ENCODE measurements at regions of chr7 and their contacts with region 1.

Region 1: DNA sequence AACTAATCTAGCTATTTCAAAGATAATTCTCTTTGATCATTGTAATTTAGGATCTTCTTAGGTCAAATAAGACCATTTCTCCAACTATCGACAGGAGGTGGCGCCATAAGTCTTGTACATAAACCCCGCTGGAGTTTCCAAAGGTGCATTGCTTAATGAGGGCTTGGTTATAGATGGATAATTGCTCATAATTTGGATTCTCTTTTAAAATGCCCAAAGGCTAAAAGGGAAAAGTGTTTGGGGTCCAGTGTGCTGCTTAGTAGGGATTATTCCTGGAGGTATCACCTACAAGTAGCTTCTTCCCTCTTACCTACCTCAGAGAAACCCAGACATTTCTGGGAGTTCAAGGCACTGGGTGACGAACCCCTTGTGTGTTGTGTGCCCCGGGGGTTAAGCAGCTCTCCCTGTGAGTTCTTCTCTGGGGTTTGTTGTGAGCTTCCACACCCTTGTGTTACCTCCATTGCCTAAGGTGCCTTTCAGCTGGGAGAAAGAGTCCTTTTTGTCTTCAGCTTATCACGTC is 75.2 kb downstream of the PAXIP1 start:
- DNase-seq: peak; percentile 39
- ATAC-seq: peak; percentile 87
- H3K4me3 ChIP-seq: peak overlapping the region; percentile 66
- H3K27ac ChIP-seq: peak overlapping the region; percentile 82
- H3K4me1 ChIP-seq: peaks cover 4% of the 10 kb centered on the region; the same call in 1 of the 2 replicates
- H3K27me3 ChIP-seq: no peaks in the 10 kb centered on the region
- CTCF ChIP-seq: peak; percentile 61 to 76 (median 62)
- EP300 ChIP-seq: no peak
- POLR2A ChIP-seq: no peak
- RAD21 ChIP-seq: peak; percentile 91

Region 2: GRCh38 chr7:154709840-154710520 is 217.7 kb before region 1 on chr7:
- CTCF ChIA-PET with region 1: no interaction called
- POLR2A ChIA-PET with region 1: no interaction called
- RAD21 ChIA-PET with region 1: no interaction called
- SMC1A ChIA-PET with region 1: no interaction called
- in situ Hi-C with region 1: no loop called
- intact Hi-C with region 1: no loop called
- DNase-seq: no peak
- ATAC-seq: no peak
- H3K4me3 ChIP-seq: no peak overlapping the region
- H3K27ac ChIP-seq: no peak overlapping the region
- H3K4me1 ChIP-seq: no peaks in the 10 kb centered on the region
- H3K27me3 ChIP-seq: no peaks in the 10 kb centered on the region
- CTCF ChIP-seq: no peak
- EP300 ChIP-seq: no peak
- POLR2A ChIP-seq: no peak
- RAD21 ChIP-seq: no peak

Region 3: GRCh38 chr7:154913638-154914312 is 13.9 kb before region 1 on chr7:
- CTCF ChIA-PET with region 1: interaction called, 61 read pairs
- POLR2A ChIA-PET with region 1: no interaction called
- RAD21 ChIA-PET with region 1: interaction called, 7 read pairs
- SMC1A ChIA-PET with region 1: interaction called, 16 read pairs
- in situ Hi-C with region 1: no loop called
- intact Hi-C with region 1: no loop called
- DNase-seq: no peak
- ATAC-seq: peak; percentile 100
- H3K4me3 ChIP-seq: no peak overlapping the region
- H3K27ac ChIP-seq: no peak overlapping the region
- H3K4me1 ChIP-seq: no peaks in the 10 kb centered on the region
- H3K27me3 ChIP-seq: no peaks in the 10 kb centered on the region; a peak in 1 of 4 replicates
- CTCF ChIP-seq: peak; percentile 76 to 92 (median 88)
- EP300 ChIP-seq: no peak
- POLR2A ChIP-seq: no peak
- RAD21 ChIP-seq: peak; percentile 84

Region 4: DNA sequence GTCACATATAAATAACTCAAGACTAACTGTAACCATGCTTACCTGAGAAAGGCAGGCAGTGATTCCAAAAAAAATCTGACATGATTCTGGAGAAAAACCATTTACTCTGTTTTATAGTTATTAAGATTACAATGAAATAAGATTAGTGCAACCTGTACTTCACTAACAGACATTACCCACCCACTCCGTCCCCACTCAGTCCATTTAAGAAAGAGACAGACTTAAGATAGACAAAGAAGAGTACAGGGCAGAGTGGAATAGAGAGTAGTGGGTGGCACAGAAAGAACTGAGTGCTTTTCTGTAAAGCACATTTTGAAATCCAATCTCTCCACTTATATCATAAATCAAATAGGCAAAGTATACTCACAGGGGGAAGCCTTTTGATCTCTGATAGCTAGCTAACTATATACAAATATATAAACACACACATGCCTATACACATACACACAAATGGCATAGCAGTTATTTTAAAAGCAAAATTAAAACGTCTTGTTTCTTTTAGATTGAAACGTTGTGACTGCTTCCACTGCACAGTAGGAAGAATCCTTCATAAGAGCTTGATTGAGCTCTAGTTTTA is 63.4 kb after region 1 on chr7:
- CTCF ChIA-PET with region 1: interaction called, 16 read pairs
- POLR2A ChIA-PET with region 1: no interaction called
- RAD21 ChIA-PET with region 1: interaction called, 6 read pairs
- SMC1A ChIA-PET with region 1: interaction called, 4 read pairs
- in situ Hi-C with region 1: no loop called
- intact Hi-C with region 1: no loop called
- DNase-seq: no peak
- ATAC-seq: no peak
- H3K4me3 ChIP-seq: no peak overlapping the region
- H3K27ac ChIP-seq: no peak overlapping the region
- H3K4me1 ChIP-seq: no peaks in the 10 kb centered on the region
- H3K27me3 ChIP-seq: no peaks in the 10 kb centered on the region
- CTCF ChIP-seq: no peak
- EP300 ChIP-seq: no peak
- POLR2A ChIP-seq: no peak
- RAD21 ChIP-seq: no peak

Region 5: DNA sequence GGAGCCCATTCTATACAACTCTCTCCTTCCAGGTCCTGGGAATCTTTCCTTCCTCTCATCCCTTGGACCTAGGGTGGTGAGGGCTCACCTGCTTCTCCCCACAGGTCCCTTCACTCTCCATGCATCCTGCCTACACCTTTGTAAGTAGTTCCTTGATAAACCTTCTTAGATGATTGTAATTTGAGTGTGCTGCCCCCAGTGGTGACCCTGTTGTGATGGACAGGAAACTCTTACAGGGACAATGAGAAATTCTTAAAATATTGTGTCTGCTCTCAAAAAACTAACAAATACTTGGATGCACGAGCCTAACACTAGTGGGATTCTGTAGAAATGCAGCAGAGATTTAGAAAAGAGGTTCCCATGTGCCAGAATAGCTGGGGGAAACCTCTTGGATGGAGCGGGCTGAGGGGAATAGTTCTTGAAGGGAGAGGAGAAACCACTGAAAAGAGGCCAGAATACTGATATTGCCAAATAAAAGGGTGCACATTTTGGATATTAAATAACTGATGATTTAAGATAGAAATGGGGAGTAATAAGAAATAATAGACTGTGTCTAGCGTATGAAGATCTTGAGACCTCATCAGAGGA is 82.0 kb after region 1 on chr7:
- CTCF ChIA-PET with region 1: interaction called, 97 read pairs
- POLR2A ChIA-PET with region 1: interaction called, 4 read pairs
- RAD21 ChIA-PET with region 1: interaction called, 56 read pairs
- SMC1A ChIA-PET with region 1: interaction called, 44 read pairs
- in situ Hi-C with region 1: no loop called
- intact Hi-C with region 1: loop called (anchors 1 kb)
- DNase-seq: no peak
- ATAC-seq: peak; percentile 77
- H3K4me3 ChIP-seq: no peak overlapping the region
- H3K27ac ChIP-seq: no peak overlapping the region
- H3K4me1 ChIP-seq: no peaks in the 10 kb centered on the region
- H3K27me3 ChIP-seq: no peaks in the 10 kb centered on the region
- CTCF ChIP-seq: peak; percentile 34 to 56 (median 50); a peak in 5 of 6 replicates
- EP300 ChIP-seq: no peak
- POLR2A ChIP-seq: no peak
- RAD21 ChIP-seq: peak; percentile 33; the same call in 1 of the 2 replicates

Region 6: DNA sequence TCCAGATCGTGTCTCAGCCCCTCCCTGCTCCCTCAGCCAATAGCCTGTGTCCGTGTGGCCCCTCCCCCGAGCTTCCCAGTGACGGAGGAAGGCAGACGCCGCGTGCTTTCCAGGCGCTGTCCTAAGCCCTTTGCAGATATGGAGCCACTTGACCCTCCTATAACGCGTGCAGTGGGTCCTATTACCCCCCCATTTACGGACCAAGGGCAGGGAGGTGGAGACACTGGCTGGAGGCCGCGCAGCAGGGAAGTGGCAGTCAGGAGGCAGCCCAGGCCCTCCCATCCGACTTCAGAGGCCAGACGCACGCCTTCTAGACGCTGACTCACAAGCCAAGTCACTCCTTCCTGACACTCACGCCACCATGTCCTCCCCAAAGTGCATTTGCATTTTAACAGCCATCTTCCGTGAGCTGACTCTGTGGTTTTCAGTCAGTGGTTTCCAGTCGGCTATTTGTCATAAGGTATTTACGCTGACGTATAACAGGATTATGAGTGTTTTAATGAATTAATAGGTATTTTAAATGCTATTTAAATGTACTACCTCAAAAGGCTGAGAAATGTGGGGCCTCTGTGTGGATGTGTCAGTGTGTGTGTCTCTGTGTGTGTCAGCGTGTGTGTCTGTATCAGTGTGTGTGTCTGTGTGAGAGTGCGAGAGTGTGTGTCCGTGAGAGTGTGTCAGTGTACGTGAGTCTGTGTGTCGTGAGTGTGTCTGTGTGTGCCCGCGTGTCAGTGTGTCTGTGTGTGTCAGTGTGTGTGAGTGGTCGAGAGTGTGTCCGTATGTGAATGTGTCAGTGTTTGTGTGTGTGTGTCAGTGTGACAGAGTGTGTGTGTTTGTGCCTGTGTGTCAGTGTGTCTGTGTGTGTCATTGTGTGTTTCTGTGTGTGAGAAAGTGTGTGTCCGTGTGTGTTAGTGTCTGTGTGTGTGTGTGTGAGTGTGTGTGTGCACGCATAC is 278.0 kb after region 1 on chr7:
- CTCF ChIA-PET with region 1: interaction called, 9 read pairs
- POLR2A ChIA-PET with region 1: interaction called, 7 read pairs
- RAD21 ChIA-PET with region 1: interaction called, 18 read pairs
- SMC1A ChIA-PET with region 1: interaction called, 12 read pairs
- in situ Hi-C with region 1: loop called (anchors 5 kb)
- intact Hi-C with region 1: loop called (anchors 5 kb)
- DNase-seq: peak; percentile 99
- ATAC-seq: peak; percentile 91
- H3K4me3 ChIP-seq: peak overlapping the region; percentile 76
- H3K27ac ChIP-seq: peak overlapping the region; percentile 97
- H3K4me1 ChIP-seq: peaks cover 23% of the 10 kb centered on the region
- H3K27me3 ChIP-seq: no peaks in the 10 kb centered on the region
- CTCF ChIP-seq: no peak
- EP300 ChIP-seq: peak; percentile 96 to 98
- POLR2A ChIP-seq: peak; percentile 90
- RAD21 ChIP-seq: no peak

Region 7: DNA sequence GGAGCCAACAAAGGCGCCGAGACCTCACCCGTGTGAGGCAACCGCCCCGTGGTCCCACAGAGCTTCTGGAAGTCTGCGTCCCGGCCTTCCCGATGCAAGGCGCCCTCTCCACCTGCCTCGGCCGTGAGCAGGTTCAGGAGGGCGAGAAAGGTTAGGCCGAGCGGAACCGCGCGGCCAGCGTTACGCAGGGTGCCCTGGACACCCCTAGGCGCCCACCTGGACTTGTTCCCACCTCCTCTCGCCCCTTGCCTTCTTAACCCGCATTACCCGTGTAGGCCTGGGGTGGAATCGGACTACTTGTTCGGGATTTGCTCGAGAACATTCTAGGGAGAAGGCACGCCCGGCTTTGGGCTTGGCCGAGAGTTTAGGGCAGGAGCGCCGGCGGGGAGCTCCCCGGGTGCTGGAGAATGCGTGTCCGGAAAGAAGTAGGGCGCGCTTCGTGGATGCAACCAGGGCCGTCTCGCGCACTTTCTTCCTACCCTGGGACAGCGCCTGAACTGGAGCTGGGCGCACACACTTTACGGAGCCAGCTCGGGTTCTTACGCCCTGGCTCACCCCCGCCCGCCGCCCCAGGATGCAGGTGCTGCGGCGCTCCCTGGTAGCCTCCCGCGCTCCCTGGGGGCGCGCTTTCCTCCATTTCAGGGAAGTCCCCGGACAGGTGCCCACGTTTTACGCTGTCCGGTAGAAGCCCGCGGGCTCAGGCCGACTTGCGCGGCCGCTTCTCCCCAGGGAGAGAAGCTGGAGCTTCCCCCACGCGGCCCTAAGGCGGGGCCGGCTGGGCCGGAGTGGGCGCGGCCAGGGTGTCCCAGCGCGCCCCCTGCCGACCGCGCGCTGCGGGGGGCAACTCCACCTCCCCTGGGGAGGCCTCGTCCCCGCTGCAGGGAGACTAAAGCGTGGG is 444.4 kb after region 1 on chr7:
- CTCF ChIA-PET with region 1: interaction called, 10 read pairs
- POLR2A ChIA-PET with region 1: no interaction called
- RAD21 ChIA-PET with region 1: interaction called, 3 read pairs
- SMC1A ChIA-PET with region 1: no interaction called
- in situ Hi-C with region 1: no loop called
- intact Hi-C with region 1: no loop called
- DNase-seq: no peak
- ATAC-seq: peak; percentile 89
- H3K4me3 ChIP-seq: peak overlapping the region; percentile 36; the same call in 1 of the 2 replicates
- H3K27ac ChIP-seq: no peak overlapping the region
- H3K4me1 ChIP-seq: peaks cover 4% of the 10 kb centered on the region
- H3K27me3 ChIP-seq: peaks cover 13 to 47% of the 10 kb centered on the region in 2 experiments
- CTCF ChIP-seq: peak; percentile 36 to 57 (median 40)
- EP300 ChIP-seq: no peak
- POLR2A ChIP-seq: no peak
- RAD21 ChIP-seq: no peak

Region 8: DNA sequence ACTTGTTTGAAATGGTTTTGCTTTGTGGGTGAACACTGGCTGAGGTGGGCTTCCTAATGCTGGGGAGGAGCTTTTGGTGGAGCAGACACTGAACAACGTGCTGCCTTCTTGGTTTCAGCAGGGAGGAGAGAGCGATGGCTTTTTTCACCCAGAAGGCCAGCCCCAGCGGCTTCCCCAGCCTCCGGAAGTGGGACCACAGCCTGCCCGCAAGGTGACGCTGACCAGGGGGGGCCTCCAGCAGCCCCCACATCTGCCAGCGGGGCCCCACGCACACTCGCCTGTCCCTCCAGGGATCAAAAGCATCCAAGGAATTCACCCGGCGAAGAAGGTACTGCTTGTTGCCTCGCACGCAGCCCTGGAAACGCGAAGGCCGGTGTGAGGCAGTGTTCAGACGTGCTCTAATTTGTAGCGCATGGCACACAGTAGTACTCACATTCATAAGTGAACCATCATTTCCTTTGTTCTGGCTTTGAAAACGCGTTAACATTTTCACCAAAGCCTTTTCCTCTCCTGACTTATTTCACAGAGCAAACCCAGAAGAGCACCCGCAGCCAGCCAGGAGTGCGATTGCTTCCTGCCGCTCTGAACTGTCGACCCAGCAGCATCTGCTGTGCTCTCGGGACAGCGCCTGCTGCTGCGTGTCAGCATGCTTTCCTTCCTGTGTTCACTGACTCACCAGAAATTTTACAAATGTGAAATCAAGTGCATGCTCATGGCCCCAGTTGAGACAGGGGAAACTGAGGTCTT is 836.2 kb after region 1 on chr7:
- CTCF ChIA-PET with region 1: interaction called, 6 read pairs
- POLR2A ChIA-PET with region 1: no interaction called
- RAD21 ChIA-PET with region 1: no interaction called
- SMC1A ChIA-PET with region 1: interaction called, 3 read pairs
- in situ Hi-C with region 1: no loop called
- intact Hi-C with region 1: loop called (anchors 10 kb)
- DNase-seq: no peak
- ATAC-seq: peak; percentile 73
- H3K4me3 ChIP-seq: no peak overlapping the region
- H3K27ac ChIP-seq: peak overlapping the region; percentile 77
- H3K4me1 ChIP-seq: peaks cover 28% of the 10 kb centered on the region
- H3K27me3 ChIP-seq: no peaks in the 10 kb centered on the region
- CTCF ChIP-seq: no peak
- EP300 ChIP-seq: no peak
- POLR2A ChIP-seq: peak; percentile 47; the same call in 1 of the 2 replicates
- RAD21 ChIP-seq: no peak